ENCODE measurements at regions of chr5 and their contacts with region 1.

Region 1: DNA sequence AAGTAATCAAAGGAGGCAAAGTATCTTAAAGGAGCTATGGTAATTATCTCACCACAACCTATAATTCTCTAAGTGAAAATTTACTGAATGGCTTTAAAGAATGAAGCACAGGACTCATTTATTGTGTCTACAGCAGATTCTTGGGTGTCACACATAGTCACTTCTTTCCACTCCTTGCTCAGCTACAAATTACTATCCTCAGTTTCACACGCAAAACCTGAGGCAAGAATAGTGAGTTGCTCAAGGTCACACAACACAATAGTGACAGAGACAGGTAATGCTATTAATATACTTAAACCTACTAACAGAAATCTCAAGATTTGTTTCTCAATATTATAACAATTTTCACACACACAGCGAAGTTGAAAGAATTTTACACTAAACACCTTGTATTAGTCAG is 120.9 kb upstream of the STK32A start:
- DNase-seq: no peak
- H3K4me3 ChIP-seq: no peak overlapping the region
- H3K27ac ChIP-seq: no peak overlapping the region
- H3K27me3 ChIP-seq: no peaks in the 10 kb centered on the region
- CTCF ChIP-seq: no peak

Region 2: GRCh38 chr5:146944764-146945616 is 169.0 kb before region 1 on chr5:
- intact Hi-C with region 1: no loop called
- DNase-seq: no peak
- H3K4me3 ChIP-seq: no peak overlapping the region
- H3K27ac ChIP-seq: peak overlapping the region in 11 of 59 donors; percentile 3 to 43 (median 19)
- H3K27me3 ChIP-seq: no peaks in the 10 kb centered on the region
- CTCF ChIP-seq: no peak

Region 3: GRCh38 chr5:147081311-147081764 is 32.6 kb before region 1 on chr5:
- intact Hi-C with region 1: no loop called
- DNase-seq: peak; percentile 7 to 87 (median 74)
- H3K4me3 ChIP-seq: peak overlapping the region; percentile 10 to 76 (median 53)
- H3K27ac ChIP-seq: peak overlapping the region; percentile 22 to 99 (median 95)
- H3K27me3 ChIP-seq: no peaks in the 10 kb centered on the region
- CTCF ChIP-seq: peak in 1 of 56 donors; percentile 17

Region 4: DNA sequence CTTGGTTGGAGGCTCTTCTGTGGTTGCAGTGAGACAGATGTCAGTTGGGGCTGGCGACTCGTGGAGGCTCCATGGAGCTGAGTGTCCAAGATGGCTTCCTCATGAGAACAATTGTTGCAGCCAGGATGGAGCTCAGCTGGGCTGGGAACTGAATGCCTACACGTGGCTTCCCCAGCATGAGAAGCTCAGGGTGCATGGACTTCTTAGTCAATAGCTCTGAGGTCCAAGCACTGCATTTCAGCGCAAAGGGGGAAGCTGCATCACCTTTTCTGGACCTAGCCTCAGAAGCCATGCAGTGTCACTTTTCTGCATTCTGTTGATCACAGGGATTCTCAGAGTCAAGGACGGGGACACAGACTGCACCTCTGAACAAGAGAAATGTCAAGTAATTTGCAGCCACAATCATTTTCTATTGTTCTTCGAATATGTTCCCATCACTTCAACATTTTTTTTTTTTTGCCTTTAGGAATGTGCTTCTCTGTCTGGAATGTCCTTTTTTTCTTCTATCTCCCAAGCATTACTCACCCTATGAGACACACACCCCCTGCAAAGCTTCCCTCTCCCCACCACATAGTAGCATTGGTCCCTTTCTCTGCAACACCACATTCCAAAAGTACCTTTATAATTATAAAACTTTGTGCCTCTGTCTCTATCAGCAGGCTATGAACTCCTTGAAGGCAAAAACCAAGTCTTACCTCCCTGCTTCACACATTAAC is 63.3 kb after region 1 on chr5:
- intact Hi-C with region 1: loop called in 1 of 2 experiments (anchors 5 kb)
- DNase-seq: no peak
- H3K4me3 ChIP-seq: no peak overlapping the region
- H3K27ac ChIP-seq: no peak overlapping the region
- H3K27me3 ChIP-seq: no peaks in the 10 kb centered on the region
- CTCF ChIP-seq: no peak

Measured in dorsolateral prefrontal cortex (tissue), 120 donors.